Heart right ventricle (tissue), 16 donors: ENCODE measurements at regions of chr11 and their contacts with region 1.

Region 1: GRCh38 chr11:124536520-124536919 is 6.9 kb downstream of the OR8B12 start:
- DNase-seq: peak; percentile 36 to 49
- ATAC-seq: peak in 7 of 8 donors; percentile 68 to 86 (median 80)
- H3K4me3 ChIP-seq: no peak overlapping the region
- H3K27ac ChIP-seq: peak overlapping the region in 2 of 10 donors; percentile 21 to 48
- H3K4me1 ChIP-seq: peaks cover 0 to 20% (median 6%) of the 10 kb centered on the region in 9 donors
- H3K27me3 ChIP-seq: no peaks in the 10 kb centered on the region
- CTCF ChIP-seq: peak in 4 of 9 donors; percentile 19 to 36 (median 30)

Region 2: DNA sequence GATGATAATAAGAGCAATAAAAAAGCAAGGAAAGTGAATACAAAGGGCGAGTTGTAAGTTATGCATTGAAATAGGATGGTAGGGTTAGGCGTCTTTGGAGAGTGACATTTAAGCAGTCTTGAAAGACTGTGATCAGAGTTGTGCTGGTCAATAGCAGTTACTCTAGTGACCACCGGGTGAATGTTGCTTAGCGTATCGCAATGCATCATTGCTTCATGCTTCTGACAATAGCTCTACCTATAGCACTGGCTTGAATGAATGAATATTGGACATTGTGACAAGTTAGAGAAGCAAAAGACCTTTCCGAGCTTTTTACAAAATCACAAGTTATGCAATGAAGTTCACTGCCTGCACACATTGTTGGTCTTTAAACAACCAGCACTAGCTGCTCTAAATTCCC is 14.7 kb after region 1 on chr11:
- intact Hi-C with region 1: loop called in 1 of 10 experiments (anchors 2 kb)
- DNase-seq: no peak
- ATAC-seq: no peak
- H3K4me3 ChIP-seq: no peak overlapping the region
- H3K27ac ChIP-seq: no peak overlapping the region
- H3K4me1 ChIP-seq: no peaks in the 10 kb centered on the region
- H3K27me3 ChIP-seq: no peaks in the 10 kb centered on the region
- CTCF ChIP-seq: no peak